CD4-positive, alpha-beta memory T cell (primary cell): ENCODE measurements at regions of chr20 and their contacts with region 1.

Region 1: DNA sequence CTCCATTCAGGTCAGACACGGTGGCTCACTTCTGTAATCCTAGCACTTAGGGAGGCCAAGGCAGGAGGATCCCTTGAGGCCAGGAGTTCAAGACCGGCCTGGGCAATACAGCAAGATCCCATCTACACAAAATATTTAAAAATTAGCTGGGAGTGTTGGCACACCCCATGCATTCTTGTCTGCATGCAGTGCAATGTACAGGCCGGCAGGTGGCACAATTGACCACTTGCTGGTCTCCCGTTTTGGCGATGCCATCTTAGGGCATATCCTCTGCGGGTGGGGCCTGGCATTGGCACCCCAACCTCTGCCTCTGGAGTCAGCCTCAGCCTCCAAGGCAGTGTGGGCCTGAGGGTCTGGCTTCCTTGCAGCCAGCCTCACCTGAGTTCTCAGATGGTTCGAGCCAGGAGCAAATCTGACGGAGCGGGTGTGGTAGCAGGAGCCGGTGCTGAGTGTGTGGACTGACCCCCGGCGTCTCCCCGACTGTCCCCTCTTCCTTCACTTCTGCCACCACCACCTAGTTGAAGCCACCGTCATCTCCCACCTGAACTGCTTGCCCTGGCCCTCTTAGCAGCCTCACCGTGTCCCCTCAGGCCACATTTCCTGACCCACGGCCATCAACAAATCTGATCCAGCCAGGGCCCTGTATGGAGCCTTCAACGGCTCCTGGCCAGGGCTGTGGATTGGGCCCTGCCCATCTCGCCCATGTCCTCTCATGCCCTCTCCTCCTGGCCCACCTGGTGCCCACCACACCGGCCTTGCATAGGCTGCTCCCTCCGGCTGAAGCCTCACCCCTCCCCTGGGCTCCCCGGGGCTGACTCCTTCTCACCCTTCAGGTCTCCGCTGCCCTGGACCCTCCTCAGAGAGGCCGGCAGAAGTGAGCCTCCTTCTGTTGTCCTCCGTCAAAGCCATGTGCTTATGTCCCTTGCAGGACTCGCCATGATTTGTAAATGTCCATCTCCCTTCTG is 44.0 kb downstream of the EFCAB8 start:
- DNase-seq: peak; percentile 64 to 70 (median 66)
- H3K4me3 ChIP-seq: no peak overlapping the region
- H3K4me3 Mint-ChIP-seq: peak overlapping the region in 3 of 8 donors; percentile 26 to 42 (median 33)
- H3K27ac ChIP-seq: no peak overlapping the region
- H3K27ac Mint-ChIP-seq: peak overlapping the region in 5 of 7 donors; percentile 5 to 80 (median 60)
- H3K4me1 ChIP-seq: peaks cover 17% of the 10 kb centered on the region
- H3K4me1 Mint-ChIP-seq: peaks cover 12 to 33% (median 23%) of the 10 kb centered on the region in 4 donors
- H3K27me3 ChIP-seq: no peaks in the 10 kb centered on the region
- H3K27me3 Mint-ChIP-seq: no peaks in the 10 kb centered on the region

Region 2: DNA sequence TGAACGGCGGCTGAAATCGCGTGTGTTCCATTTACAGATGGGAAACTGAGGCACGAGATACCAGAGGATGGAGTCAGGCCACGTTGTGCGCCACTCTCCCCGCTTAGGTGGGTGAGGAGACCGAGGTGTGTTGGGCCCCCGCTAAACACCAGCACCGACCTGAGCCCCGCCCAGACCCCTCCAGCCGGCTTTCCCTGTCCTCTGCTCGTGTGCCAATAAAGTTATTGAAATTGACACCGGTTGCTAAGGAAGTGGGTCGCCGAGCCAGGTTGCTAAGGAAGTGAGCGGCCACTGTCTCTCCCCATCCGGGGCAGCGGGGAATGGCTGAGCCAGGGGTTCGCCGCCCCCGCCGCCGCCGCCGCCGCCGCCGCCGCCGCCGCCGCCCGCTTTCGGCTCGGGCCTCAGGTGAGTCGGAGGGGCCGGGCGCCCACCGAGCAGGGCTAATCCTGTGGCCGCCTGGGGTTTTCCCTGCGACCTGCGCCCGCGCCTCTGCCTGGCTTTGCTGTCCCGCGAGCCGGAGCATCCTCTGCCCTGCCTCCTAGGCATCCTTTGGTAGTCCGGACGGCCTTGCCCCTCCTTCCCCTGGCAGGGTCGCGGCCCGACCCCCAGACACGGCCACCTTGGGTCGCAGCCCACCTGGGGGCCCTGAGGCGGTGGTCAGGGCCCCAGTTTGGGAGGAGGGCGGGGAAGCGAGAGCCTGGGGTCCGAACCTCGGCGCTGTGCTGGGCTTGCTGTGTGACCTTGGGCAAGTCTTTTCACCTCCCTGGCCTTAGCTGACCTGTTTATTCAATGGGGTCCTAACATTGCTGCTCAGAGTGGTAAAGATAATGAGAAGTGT is 625.2 kb before region 1 on chr20 and contains the start of gene KIF3B:
- CTCF ChIA-PET with region 1: no interaction called
- POLR2A ChIA-PET with region 1: no interaction called
- intact Hi-C with region 1: no loop called
- DNase-seq: peak; percentile 87 to 90 (median 88)
- H3K4me3 ChIP-seq: peak within 1 kb of the TSS; percentile 68 to 96
- H3K4me3 Mint-ChIP-seq: peak within 1 kb of the TSS; percentile 91 to 94 (median 92)
- H3K27ac ChIP-seq: peak within 1 kb of the TSS; percentile 85
- H3K27ac Mint-ChIP-seq: peak within 1 kb of the TSS; percentile 88 to 98 (median 96)
- H3K4me1 ChIP-seq: peaks cover 27% of the 10 kb centered on the region
- H3K4me1 Mint-ChIP-seq: peaks cover 27 to 52% (median 42%) of the 10 kb centered on the region in 4 donors
- H3K27me3 ChIP-seq: no peaks in the 10 kb centered on the region
- H3K27me3 Mint-ChIP-seq: no peaks in the 10 kb centered on the region
- total RNA-seq, gene KIF3B: 14.2 to 14.5 TPM

Region 3: DNA sequence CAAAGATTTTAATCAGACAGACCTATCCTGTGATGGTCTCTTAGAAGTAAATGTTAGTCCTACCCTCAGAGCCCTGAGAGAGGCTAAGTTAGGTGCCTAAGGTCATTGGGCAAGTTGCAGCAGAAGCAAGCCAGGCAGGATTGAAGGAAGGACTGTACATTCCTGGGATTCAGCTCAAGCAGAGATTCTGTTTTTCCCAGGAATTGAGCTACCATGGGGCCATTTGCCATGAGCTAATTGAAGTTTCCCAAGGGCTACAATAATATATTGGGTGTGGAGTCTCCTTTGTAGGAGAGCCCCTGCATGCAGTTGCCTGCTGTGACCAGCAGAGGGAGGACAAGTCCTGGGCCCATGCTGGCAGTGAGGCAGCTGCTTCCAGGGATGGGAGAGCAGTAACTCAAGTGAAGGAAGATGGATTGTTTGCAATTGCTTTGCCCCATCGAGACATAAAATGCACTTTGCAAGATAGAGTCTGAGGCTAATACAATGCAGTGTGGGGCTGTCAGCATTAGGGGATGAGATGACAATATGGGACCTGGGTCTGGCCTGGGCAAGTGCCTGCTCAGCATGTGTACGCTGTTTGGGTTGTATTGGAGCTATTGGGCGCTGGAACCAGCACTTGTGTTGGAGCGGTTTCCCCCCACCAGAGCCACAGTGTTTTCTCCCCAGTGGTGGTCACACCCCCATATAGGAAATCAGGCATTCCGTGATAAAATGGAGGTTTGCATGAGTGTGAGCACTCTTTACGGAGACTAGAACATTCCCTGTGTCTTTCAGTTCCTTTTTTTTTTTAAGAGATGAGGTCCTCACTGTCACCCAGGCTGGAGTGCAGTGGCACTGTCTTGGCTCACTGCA is 112.6 kb before region 1 on chr20:
- CTCF ChIA-PET with region 1: interaction called, 12 read pairs
- POLR2A ChIA-PET with region 1: no interaction called
- intact Hi-C with region 1: loop called (anchors 1 kb)
- DNase-seq: peak; percentile 66 to 73 (median 67)
- H3K4me3 ChIP-seq: no peak overlapping the region
- H3K4me3 Mint-ChIP-seq: peak overlapping the region in 1 of 8 donors; percentile 9
- H3K27ac ChIP-seq: no peak overlapping the region
- H3K27ac Mint-ChIP-seq: peak overlapping the region in 6 of 7 donors; percentile 16 to 88 (median 70)
- H3K4me1 ChIP-seq: peaks cover 41% of the 10 kb centered on the region
- H3K4me1 Mint-ChIP-seq: peaks cover 23 to 44% (median 31%) of the 10 kb centered on the region in 4 donors
- H3K27me3 ChIP-seq: no peaks in the 10 kb centered on the region
- H3K27me3 Mint-ChIP-seq: no peaks in the 10 kb centered on the region

Region 4: DNA sequence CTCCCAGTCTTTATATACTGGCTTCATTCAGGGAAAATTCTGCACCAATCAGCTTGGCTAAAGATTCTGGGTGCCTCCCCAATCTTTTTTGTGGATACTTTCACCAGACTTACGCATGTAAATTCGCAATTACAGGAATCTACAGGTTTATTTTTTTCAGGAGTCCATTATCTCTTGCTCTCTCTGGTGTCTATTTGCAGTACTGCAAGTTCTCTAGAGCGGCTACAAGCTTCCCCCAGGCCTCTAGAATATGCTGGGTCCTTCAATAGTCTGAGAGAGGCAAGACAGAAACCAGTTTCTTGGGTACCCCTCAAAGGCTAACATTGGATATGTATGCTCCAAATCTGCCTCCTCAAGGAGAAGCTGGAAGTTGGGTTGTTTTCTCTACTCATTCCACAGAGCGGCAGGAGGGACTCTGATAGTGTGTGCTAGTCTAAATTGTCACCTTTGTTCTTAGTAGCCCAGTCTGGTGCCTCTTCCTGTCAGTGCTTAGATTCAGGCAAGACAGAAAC is 43.0 kb after region 1 on chr20:
- CTCF ChIA-PET with region 1: interaction called, 25 read pairs
- POLR2A ChIA-PET with region 1: no interaction called
- intact Hi-C with region 1: loop called (anchors 1 kb)
- DNase-seq: peak in 4 of 5 donors; percentile 42 to 54 (median 50)
- H3K4me3 ChIP-seq: peak overlapping the region in 1 of 2 donors; percentile 9
- H3K4me3 Mint-ChIP-seq: peak overlapping the region; percentile 51 to 73 (median 66)
- H3K27ac ChIP-seq: no peak overlapping the region
- H3K27ac Mint-ChIP-seq: peak overlapping the region; percentile 54 to 93 (median 84)
- H3K4me1 ChIP-seq: peaks cover 36% of the 10 kb centered on the region
- H3K4me1 Mint-ChIP-seq: peaks cover 30 to 40% (median 36%) of the 10 kb centered on the region in 4 donors
- H3K27me3 ChIP-seq: no peaks in the 10 kb centered on the region
- H3K27me3 Mint-ChIP-seq: no peaks in the 10 kb centered on the region

Region 5: GRCh38 chr20:33076662-33077372 is 174.1 kb after region 1 on chr20:
- CTCF ChIA-PET with region 1: interaction called, 32 read pairs
- POLR2A ChIA-PET with region 1: no interaction called
- intact Hi-C with region 1: loop called (anchors 1 kb)
- DNase-seq: peak in 4 of 5 donors; percentile 24 to 33 (median 29)
- H3K4me3 ChIP-seq: no peak overlapping the region
- H3K4me3 Mint-ChIP-seq: no peak overlapping the region
- H3K27ac ChIP-seq: no peak overlapping the region
- H3K27ac Mint-ChIP-seq: peak overlapping the region in 1 of 7 donors; percentile 62
- H3K4me1 ChIP-seq: no peaks in the 10 kb centered on the region
- H3K4me1 Mint-ChIP-seq: peaks cover 0 to 9% (median 4%) of the 10 kb centered on the region in 4 donors
- H3K27me3 ChIP-seq: no peaks in the 10 kb centered on the region
- H3K27me3 Mint-ChIP-seq: peaks cover 0 to 2% of the 10 kb centered on the region in 2 donors

Region 6: DNA sequence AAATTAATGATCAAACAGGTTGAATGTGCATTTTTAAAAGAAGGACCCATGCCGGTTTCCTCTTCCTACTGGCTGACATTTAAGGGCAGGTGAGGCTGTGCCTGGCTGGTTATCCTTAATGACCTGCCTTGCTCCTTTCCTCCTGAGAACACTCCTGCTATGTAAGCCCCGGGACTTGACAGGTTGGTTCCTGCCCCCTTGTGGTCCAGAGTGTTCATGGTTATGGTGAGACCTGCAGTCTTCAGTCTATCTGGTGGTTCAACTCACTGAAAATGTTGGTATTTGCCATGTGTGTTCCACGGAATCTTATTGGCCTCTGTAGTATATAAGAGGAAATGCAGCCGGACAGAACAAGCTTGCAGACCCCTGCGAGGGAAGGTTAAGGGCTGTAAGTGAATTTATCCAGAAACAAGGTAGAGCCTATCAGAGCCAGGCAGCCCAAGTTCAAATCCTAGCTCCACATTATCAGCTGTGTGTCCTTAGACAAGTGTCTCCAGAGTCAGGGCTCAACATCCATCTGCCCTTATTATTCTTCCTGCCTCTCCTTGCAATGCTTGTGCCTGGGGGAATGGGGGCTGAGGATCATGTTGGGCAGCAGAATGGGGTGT is 309.2 kb after region 1 on chr20:
- CTCF ChIA-PET with region 1: interaction called, 5 read pairs
- POLR2A ChIA-PET with region 1: no interaction called
- intact Hi-C with region 1: loop called (anchors 5 kb)
- DNase-seq: peak in 2 of 5 donors; percentile 8 to 15
- H3K4me3 ChIP-seq: no peak overlapping the region
- H3K4me3 Mint-ChIP-seq: no peak overlapping the region
- H3K27ac ChIP-seq: no peak overlapping the region
- H3K27ac Mint-ChIP-seq: no peak overlapping the region
- H3K4me1 ChIP-seq: no peaks in the 10 kb centered on the region
- H3K4me1 Mint-ChIP-seq: peaks cover 0 to 4% (median 2%) of the 10 kb centered on the region in 4 donors
- H3K27me3 ChIP-seq: no peaks in the 10 kb centered on the region
- H3K27me3 Mint-ChIP-seq: peaks cover 26 to 57% of the 10 kb centered on the region in 2 donors

Region 7: GRCh38 chr20:33299111-33299603 is 396.4 kb after region 1 on chr20:
- CTCF ChIA-PET with region 1: interaction called, 16 read pairs
- POLR2A ChIA-PET with region 1: no interaction called
- intact Hi-C with region 1: loop called (anchors 1 kb)
- DNase-seq: peak; percentile 56 to 75 (median 63)
- H3K4me3 ChIP-seq: no peak overlapping the region
- H3K4me3 Mint-ChIP-seq: no peak overlapping the region
- H3K27ac ChIP-seq: no peak overlapping the region
- H3K27ac Mint-ChIP-seq: no peak overlapping the region
- H3K4me1 ChIP-seq: no peaks in the 10 kb centered on the region
- H3K4me1 Mint-ChIP-seq: peaks cover 0 to 2% (median under 1%) of the 10 kb centered on the region in 4 donors
- H3K27me3 ChIP-seq: no peaks in the 10 kb centered on the region
- H3K27me3 Mint-ChIP-seq: no peaks in the 10 kb centered on the region

Region 8: DNA sequence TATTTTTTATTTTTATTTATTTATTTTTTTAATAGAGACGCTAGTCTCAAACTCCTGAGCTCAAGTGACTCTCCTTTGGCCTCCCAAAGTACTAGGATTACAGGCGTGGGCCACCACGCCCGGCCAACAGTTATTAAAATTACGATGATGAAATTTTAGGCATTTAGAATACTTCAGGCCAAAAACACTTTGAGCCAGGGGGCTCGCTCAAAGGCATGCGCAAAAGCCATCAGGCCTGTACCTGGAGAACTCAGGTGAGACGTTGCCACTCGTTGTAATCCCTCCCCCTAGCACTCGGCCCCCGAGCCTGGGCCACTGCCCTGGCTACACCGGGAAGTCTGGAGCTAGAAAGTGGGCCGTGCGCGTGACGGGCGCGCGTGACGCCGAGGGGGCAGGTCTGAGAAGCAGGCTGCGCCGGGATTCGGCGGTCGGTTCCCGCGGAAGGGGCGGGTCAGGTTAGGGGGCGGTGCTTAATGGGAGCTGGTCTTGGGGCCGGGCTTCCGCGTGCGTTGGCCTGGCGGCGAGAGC is 586.8 kb after region 1 on chr20:
- CTCF ChIA-PET with region 1: no interaction called
- POLR2A ChIA-PET with region 1: no interaction called
- intact Hi-C with region 1: no loop called
- DNase-seq: peak; percentile 98 to 99 (median 99)
- H3K4me3 ChIP-seq: peak overlapping the region; percentile 61 to 70
- H3K4me3 Mint-ChIP-seq: peak overlapping the region; percentile 81 to 96 (median 86)
- H3K27ac ChIP-seq: peak overlapping the region; percentile 89
- H3K27ac Mint-ChIP-seq: peak overlapping the region; percentile 92 to 95 (median 94)
- H3K4me1 ChIP-seq: peaks cover 16% of the 10 kb centered on the region
- H3K4me1 Mint-ChIP-seq: peaks cover 8 to 24% (median 18%) of the 10 kb centered on the region in 4 donors
- H3K27me3 ChIP-seq: no peaks in the 10 kb centered on the region
- H3K27me3 Mint-ChIP-seq: no peaks in the 10 kb centered on the region